ENCODE measurements at regions of chr4 and their contacts with region 1.

Region 1: DNA sequence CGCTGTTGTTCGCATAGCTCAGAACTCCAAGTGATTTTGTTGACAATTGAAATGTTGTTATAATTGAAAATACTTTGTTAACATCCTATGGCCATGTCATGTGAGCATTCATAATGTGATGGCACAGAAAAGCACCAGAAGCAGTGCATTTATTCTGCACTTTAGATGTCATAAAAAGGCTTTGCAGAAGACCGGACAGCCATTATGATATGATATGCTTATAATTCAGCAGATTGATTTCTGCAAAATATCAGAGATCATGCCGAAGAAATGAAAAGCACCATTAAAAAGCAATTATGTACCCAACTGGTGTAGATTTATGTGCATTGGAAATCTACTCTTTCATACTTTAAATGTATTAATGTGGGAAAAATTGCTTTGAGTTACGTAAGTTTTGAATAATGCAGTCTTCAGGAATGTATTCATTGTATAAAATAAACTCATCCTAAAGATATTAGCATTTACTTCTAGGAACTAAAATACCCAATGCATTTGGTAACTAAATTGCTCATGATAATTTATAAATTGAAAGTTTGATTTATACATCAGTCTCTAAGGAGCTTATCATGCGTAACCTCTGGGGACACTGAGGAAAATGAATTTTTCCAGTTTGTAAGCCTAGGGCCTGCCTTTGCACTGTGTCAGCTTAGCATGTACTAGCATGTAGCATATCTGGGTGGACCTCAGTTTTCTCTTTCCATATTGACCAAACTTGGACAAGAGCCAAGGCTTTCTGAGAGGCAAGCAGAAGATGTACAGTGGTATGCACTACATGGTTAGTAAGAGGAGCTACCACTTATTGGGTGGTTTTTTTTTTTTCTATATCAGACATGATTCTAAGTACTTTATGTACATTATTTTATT is 43.6 kb downstream of the TLR10 start:
- DNase-seq: no peak
- ATAC-seq: no peak

Region 2: DNA sequence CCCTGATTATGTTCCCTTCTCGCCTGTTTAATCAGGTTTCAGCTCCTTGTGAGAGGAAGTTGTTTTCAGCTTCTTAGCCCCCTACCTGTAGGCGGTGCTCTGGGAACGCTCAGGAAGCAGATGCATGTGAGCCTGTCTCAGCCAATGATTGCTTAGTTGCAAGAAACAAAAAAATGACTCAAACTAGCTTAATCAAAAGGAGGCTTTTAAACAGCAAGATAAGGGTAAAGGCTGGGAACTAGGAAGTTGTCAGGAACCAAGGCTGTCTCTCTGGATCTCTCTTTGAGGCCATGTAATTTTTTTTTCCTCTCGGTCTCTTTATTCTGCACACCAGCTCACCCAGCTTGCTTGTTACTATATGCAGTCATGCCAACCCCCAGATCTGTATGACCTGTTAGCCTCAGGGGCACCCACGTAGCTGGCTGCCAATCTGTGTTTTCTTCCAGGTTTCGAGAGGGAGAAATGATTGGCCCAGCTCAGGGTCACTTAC is 669.9 kb before region 1 on chr4:
- intact Hi-C with region 1: loop called (anchors 5 kb)
- DNase-seq: no peak
- ATAC-seq: peak; percentile 35

Region 3: GRCh38 chr4:39032218-39033085 is 293.3 kb after region 1 on chr4 and contains the start of gene TMEM156:
- intact Hi-C with region 1: no loop called
- DNase-seq: no peak
- ATAC-seq: no peak
- total RNA-seq, gene TMEM156: not detected